K562 (cell line): ENCODE measurements at regions of chr18 and their contacts with region 1.

Region 1: GRCh38 chr18:24354286-24354685 is 43.3 kb downstream of the OSBPL1A start:
- DNase-seq: no peak
- ATAC-seq: no peak
- H3K4me3 ChIP-seq: no peak overlapping the region
- H3K27ac ChIP-seq: no peak overlapping the region
- H3K4me1 ChIP-seq: no peaks in the 10 kb centered on the region
- H3K27me3 ChIP-seq: no peaks in the 10 kb centered on the region
- CTCF ChIP-seq: no peak
- EP300 ChIP-seq: no peak
- POLR2A ChIP-seq: no peak
- RAD21 ChIP-seq: no peak

Region 2: GRCh38 chr18:24293254-24293653 is 61.0 kb before region 1 on chr18:
- CTCF ChIA-PET with region 1: no interaction called
- POLR2A ChIA-PET with region 1: no interaction called
- in situ Hi-C with region 1: no loop called
- intact Hi-C with region 1: loop called (anchors 10 kb)
- DNase-seq: no peak
- ATAC-seq: peak; percentile 59
- H3K4me3 ChIP-seq: no peak overlapping the region
- H3K27ac ChIP-seq: no peak overlapping the region
- H3K4me1 ChIP-seq: no peaks in the 10 kb centered on the region
- H3K27me3 ChIP-seq: peaks cover 2 to 5% of the 10 kb centered on the region in 2 experiments; a peak in 1 of 5 replicates
- CTCF ChIP-seq: no peak
- EP300 ChIP-seq: no peak
- POLR2A ChIP-seq: no peak
- RAD21 ChIP-seq: no peak